Activated CD4-positive, alpha-beta T cell treated with anti-CD3 and anti-CD28 coated beads for 36 hours (primary cell): ENCODE measurements at regions of chr17 and their contacts with region 1.

Region 1: DNA sequence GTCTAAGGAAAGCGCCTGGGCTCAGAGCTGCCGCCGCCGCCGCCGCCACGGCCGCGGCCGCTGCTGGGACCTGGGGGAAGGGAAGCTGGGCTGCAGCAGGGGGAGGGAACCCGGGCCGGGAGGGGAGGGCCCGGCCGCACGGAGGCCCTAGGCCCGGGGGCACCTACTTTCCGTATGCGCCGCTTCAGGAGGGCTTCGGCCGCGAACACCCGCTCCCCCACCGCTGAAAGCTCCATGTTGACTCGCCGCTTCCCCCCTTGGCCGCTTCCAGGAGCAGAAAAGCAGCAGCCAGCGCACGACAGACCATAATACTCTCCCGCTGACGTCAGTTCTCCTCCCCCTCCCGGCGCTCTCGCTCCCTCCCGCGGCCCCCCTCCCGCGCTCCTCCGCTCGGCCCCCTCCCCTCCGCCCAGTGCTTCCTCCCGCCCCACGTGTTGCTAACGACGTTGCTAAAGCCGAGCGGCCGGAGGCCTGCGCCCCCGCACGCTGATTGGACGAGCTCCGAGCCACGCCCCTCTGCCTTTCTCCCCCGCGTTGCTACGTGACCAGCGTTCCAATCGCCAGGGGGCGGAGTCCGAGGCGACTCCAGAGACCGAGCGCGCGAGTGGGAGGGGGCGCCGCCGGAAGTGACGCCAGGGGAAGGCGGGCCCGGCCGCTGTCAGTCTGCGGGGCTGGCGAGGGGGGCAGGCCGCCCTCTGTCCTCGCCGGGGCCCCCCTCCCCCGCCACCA is at the start of gene CBX8:
- DNase-seq: peak; percentile 100
- ATAC-seq: peak; percentile 88
- H3K4me3 Mint-ChIP-seq: peak within 1 kb of the TSS; percentile 79
- H3K27ac Mint-ChIP-seq: peak within 1 kb of the TSS; percentile 55
- H3K4me1 Mint-ChIP-seq: peaks cover 33% of the 10 kb centered on the region
- H3K27me3 Mint-ChIP-seq: peaks cover 35% of the 10 kb centered on the region
- total RNA-seq, gene CBX8: 4.7 to 6.0 TPM

Region 2: GRCh38 chr17:79728226-79728907 is 68.6 kb before region 1 on chr17:
- CTCF ChIA-PET with region 1: no interaction called
- POLR2A ChIA-PET with region 1: no interaction called
- intact Hi-C with region 1: loop called in 1 of 2 experiments (anchors 1 kb)
- DNase-seq: peak; percentile 91
- ATAC-seq: peak; percentile 90
- H3K4me3 Mint-ChIP-seq: peak overlapping the region; percentile 63
- H3K27ac Mint-ChIP-seq: peak overlapping the region; percentile 75
- H3K4me1 Mint-ChIP-seq: peaks cover 4% of the 10 kb centered on the region
- H3K27me3 Mint-ChIP-seq: no peaks in the 10 kb centered on the region

Region 3: GRCh38 chr17:79765708-79766107 is 31.2 kb before region 1 on chr17:
- CTCF ChIA-PET with region 1: no interaction called
- POLR2A ChIA-PET with region 1: no interaction called
- intact Hi-C with region 1: no loop called
- DNase-seq: no peak
- ATAC-seq: no peak
- H3K4me3 Mint-ChIP-seq: no peak overlapping the region
- H3K27ac Mint-ChIP-seq: no peak overlapping the region
- H3K4me1 Mint-ChIP-seq: no peaks in the 10 kb centered on the region
- H3K27me3 Mint-ChIP-seq: peaks cover 8% of the 10 kb centered on the region

Region 4: GRCh38 chr17:79777894-79778503 is 18.9 kb before region 1 on chr17 and contains the start of gene CBX2:
- CTCF ChIA-PET with region 1: no interaction called
- POLR2A ChIA-PET with region 1: interaction called, 4 read pairs
- intact Hi-C with region 1: loop called in 1 of 2 experiments (anchors 1 kb)
- DNase-seq: peak; percentile 90
- ATAC-seq: peak; percentile 84
- H3K4me3 Mint-ChIP-seq: peak within 1 kb of the TSS; percentile 77
- H3K27ac Mint-ChIP-seq: peak within 1 kb of the TSS; percentile 76
- H3K4me1 Mint-ChIP-seq: peaks cover 17% of the 10 kb centered on the region
- H3K27me3 Mint-ChIP-seq: peaks cover 64% of the 10 kb centered on the region
- total RNA-seq, gene CBX2: 4.2 to 4.3 TPM

Region 5: GRCh38 chr17:79826204-79826680 is 29.3 kb after region 1 on chr17:
- CTCF ChIA-PET with region 1: no interaction called
- POLR2A ChIA-PET with region 1: no interaction called
- intact Hi-C with region 1: no loop called
- DNase-seq: no peak
- ATAC-seq: no peak
- H3K4me3 Mint-ChIP-seq: no peak overlapping the region
- H3K27ac Mint-ChIP-seq: no peak overlapping the region
- H3K4me1 Mint-ChIP-seq: peaks cover 8% of the 10 kb centered on the region
- H3K27me3 Mint-ChIP-seq: peaks cover 10% of the 10 kb centered on the region

Region 6: DNA sequence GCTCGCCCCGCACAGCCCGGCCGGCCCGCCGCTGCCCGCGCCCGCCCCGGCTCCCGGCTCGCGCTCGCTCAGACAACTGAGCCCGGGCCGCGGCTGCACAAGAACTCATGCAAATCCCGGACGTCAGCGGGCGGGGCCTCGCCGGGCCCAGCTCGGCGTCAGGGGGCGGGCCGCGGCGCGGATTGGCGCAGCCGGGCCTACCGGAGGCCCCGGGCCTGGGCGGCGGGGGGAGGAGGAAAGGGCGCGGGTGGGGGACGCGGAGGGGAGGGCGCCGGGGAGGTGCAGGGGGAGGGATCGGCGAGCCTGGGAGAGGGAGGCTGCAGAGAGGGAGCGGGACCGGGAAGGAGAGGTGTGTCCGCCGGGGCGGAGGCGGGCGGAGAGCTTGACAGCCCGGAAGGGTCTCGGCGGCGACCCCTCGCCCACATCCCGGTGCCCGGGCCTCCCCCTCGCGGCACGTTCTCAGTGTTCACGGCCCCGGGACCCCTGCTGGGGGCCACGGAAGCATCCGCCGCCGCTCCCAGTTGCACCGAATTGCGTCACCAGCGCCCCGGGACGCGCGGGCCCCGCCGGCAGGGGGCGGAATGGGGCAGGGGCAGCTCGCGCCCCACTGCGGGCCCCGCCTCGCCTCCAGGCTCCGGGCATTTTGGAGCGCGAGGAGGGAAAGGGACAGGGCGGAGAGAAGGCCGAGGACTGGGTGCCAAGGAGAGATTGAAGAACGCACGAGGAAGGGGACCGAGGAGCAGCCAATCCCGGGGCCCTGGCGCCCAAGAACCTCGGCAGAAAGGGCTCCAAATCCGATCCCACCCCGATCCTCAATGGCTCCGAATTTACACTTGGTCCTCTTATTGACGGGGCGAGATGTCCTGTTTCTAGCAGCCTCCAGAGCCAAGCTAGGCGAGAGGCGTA is 42.7 kb after region 1 on chr17 and contains the start of gene CBX4:
- CTCF ChIA-PET with region 1: interaction called, 8 read pairs
- POLR2A ChIA-PET with region 1: interaction called, 8 read pairs
- intact Hi-C with region 1: loop called (anchors 1 to 2 kb)
- DNase-seq: peak; percentile 96
- ATAC-seq: peak; percentile 80
- H3K4me3 Mint-ChIP-seq: peak within 1 kb of the TSS; percentile 92
- H3K27ac Mint-ChIP-seq: peak within 1 kb of the TSS; percentile 82
- H3K4me1 Mint-ChIP-seq: peaks cover 49% of the 10 kb centered on the region
- H3K27me3 Mint-ChIP-seq: peaks cover 29% of the 10 kb centered on the region
- total RNA-seq, gene CBX4: 14.9 to 18.5 TPM

Region 7: DNA sequence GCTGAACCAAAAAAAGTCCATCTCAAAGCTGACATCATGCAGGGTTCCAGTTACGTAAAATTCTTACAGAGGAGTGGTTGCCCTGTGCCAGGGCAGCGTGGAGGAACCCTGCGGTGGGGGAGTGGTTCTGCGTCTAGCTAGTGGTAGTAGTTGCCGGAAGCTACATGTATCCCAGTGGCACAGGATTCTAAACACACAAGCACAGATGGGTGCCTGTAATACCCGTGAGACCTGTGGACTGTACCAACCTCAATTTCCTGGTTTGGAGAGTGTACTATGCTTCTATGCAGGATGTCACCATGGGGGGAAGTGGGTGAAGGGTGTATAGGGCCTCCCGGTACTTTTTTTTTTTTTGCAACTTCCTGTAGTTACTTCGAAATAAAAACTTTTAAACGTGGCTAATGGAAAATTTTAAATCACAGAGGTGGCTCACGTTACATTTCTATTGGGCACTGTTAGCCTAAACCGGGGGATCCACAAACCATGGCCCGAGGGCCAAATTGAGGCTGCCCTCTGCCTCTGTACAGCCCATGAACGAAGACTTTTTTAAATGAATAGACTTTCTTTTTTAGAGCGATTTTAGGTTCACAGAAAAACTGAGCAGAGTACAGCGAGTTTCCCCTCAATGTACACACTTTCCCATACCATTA is 200.2 kb after region 1 on chr17:
- CTCF ChIA-PET with region 1: interaction called, 3 read pairs
- POLR2A ChIA-PET with region 1: no interaction called
- intact Hi-C with region 1: loop called in 1 of 2 experiments (anchors 1 kb)
- DNase-seq: peak; percentile 88
- ATAC-seq: peak; percentile 88
- H3K4me3 Mint-ChIP-seq: peak overlapping the region; percentile 60
- H3K27ac Mint-ChIP-seq: peak overlapping the region; percentile 98
- H3K4me1 Mint-ChIP-seq: peaks cover 53% of the 10 kb centered on the region
- H3K27me3 Mint-ChIP-seq: no peaks in the 10 kb centered on the region

Region 8: GRCh38 chr17:80101011-80101945 is 304.4 kb after region 1 on chr17 and contains the start of gene GAA:
- CTCF ChIA-PET with region 1: no interaction called
- POLR2A ChIA-PET with region 1: no interaction called
- intact Hi-C with region 1: loop called in 1 of 2 experiments (anchors 5 kb)
- DNase-seq: peak; percentile 93
- ATAC-seq: peak; percentile 89
- H3K4me3 Mint-ChIP-seq: peak within 1 kb of the TSS; percentile 84
- H3K27ac Mint-ChIP-seq: peak within 1 kb of the TSS; percentile 68
- H3K4me1 Mint-ChIP-seq: peaks cover 26% of the 10 kb centered on the region
- H3K27me3 Mint-ChIP-seq: no peaks in the 10 kb centered on the region
- total RNA-seq, gene GAA: 28.4 to 32.8 TPM

Region 9: DNA sequence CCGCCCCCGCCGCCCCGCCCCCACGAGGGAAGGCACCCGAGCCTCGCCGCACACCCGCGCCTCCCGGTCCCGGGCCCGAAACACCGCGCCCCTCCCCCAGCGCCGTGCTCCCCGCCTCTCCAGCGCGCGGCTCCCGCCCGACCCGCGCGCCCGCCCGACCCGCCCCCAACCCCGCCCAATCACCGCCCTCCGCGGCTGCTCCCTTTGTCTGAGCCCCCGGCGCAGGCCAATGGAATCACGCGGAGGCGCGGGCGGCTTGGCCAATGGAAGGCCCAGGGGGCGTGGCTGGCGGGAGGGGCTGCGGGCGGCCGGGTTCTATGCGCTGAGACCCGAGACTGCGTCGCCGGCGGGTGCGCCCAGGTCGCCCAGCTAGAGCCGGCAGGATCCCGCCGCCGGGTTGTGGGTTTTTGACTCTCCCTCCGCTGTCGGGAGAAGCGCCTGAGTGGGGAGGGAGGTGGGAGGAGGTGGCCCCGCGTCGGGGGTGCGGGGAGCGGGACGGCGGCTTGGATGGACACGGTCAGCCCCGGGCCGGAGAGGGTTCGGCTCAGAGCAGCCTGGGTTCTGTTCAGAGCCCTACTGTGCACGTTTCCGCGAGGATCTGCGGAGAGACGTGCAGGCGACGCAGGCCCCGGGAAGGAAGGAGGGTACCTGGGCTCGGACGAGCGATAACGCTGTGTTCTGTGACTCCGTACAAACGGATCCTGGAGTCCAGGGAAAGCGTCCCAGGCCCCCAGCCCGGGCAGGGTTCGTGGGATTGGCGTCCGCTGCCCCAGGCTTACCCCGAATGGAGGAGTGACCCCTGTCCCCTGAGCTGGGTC is 1549.4 kb after region 1 on chr17:
- CTCF ChIA-PET with region 1: no interaction called
- POLR2A ChIA-PET with region 1: no interaction called
- intact Hi-C with region 1: loop called in 1 of 2 experiments (anchors 1 kb)
- DNase-seq: peak; percentile 98
- ATAC-seq: peak; percentile 93
- H3K4me3 Mint-ChIP-seq: peak overlapping the region; percentile 26
- H3K27ac Mint-ChIP-seq: no peak overlapping the region
- H3K4me1 Mint-ChIP-seq: peaks cover 19% of the 10 kb centered on the region
- H3K27me3 Mint-ChIP-seq: peaks cover 25% of the 10 kb centered on the region